ENCODE measurements at regions of chr15 and their contacts with region 1.

Region 1: DNA sequence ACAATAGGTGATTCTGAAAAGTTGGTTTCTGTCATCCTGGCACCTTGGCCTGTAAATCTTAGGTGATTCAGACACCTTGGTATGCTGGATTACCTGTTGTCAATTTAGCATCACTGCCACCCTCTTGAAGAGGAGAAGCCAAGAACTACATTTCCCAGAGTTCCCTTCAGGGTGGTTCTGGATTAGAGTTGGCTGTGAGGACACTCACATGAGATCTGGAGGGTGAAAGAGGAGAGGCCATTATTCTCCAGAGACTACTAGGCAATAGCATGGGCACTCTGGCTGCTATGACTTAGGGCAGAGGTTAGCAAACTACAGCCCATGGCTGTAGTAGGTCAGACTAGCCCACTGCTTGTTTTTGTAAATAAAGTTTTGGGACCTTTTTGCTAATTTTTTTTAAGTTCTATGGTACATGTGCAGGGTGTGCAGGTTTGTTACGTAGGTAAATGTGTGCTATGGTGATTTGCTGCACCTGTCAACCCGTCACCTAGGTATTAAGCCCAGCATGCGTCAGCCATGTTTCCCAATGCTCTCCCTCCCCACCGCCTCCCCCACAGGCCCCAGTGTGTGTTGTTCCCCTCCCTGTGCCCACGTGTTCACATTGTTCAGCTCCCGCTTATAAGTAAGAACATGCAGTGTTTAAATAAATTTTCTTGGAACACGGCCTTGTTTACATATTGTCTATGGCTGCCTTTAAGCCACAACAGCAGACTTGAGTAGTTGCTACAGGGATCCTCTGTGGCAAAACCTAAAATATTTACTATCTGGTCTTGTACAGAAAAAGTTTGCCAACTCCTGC is 41.5 kb upstream of the CORO2B start:
- DNase-seq: no peak
- ATAC-seq: no peak
- H3K4me3 Mint-ChIP-seq: no peak overlapping the region
- H3K27ac Mint-ChIP-seq: no peak overlapping the region
- H3K4me1 Mint-ChIP-seq: no peaks in the 10 kb centered on the region
- H3K27me3 Mint-ChIP-seq: peaks cover 12% of the 10 kb centered on the region
- CTCF ChIP-seq: no peak

Region 2: GRCh38 chr15:68210821-68211655 is 326.3 kb before region 1 on chr15:
- CTCF ChIA-PET with region 1: no interaction called
- POLR2A ChIA-PET with region 1: no interaction called
- intact Hi-C with region 1: no loop called
- DNase-seq: peak; percentile 64
- ATAC-seq: peak; percentile 48
- H3K4me3 Mint-ChIP-seq: no peak overlapping the region
- H3K27ac Mint-ChIP-seq: no peak overlapping the region
- H3K4me1 Mint-ChIP-seq: peaks cover 26% of the 10 kb centered on the region
- H3K27me3 Mint-ChIP-seq: no peaks in the 10 kb centered on the region
- CTCF ChIP-seq: peak; percentile 78

Region 3: GRCh38 chr15:68503791-68504680 is 33.3 kb before region 1 on chr15:
- CTCF ChIA-PET with region 1: no interaction called
- POLR2A ChIA-PET with region 1: no interaction called
- intact Hi-C with region 1: no loop called
- DNase-seq: no peak
- ATAC-seq: no peak
- H3K4me3 Mint-ChIP-seq: no peak overlapping the region
- H3K27ac Mint-ChIP-seq: no peak overlapping the region
- H3K4me1 Mint-ChIP-seq: peaks cover 6% of the 10 kb centered on the region
- H3K27me3 Mint-ChIP-seq: no peaks in the 10 kb centered on the region
- CTCF ChIP-seq: no peak

Region 4: DNA sequence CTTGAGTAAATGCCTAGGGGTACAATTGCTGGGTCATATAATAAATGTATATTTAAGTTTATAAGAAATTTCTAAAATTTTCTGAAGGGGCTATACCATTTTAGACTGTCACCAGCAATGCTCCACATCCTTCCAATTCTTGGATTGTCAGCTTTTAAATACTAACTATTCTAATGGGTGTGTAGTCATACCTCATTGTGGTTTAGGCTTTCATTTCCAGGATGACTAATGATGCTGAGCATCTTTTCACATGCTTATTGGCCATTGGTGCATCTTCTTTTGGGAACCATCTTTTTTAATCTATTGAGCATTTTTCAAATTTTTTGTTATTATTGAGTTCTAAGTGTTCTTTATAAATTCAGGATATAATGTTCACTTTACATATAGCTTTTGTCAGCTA is 11.0 kb before region 1 on chr15:
- CTCF ChIA-PET with region 1: interaction called, 16 read pairs
- POLR2A ChIA-PET with region 1: interaction called, 3 read pairs
- intact Hi-C with region 1: no loop called
- DNase-seq: no peak
- ATAC-seq: peak; percentile 80
- H3K4me3 Mint-ChIP-seq: no peak overlapping the region
- H3K27ac Mint-ChIP-seq: no peak overlapping the region
- H3K4me1 Mint-ChIP-seq: peaks cover 26% of the 10 kb centered on the region
- H3K27me3 Mint-ChIP-seq: peaks cover 14% of the 10 kb centered on the region
- CTCF ChIP-seq: no peak